Tibial artery (tissue), 4 donors: ENCODE measurements at regions of chr10 and their contacts with region 1.

Region 1: DNA sequence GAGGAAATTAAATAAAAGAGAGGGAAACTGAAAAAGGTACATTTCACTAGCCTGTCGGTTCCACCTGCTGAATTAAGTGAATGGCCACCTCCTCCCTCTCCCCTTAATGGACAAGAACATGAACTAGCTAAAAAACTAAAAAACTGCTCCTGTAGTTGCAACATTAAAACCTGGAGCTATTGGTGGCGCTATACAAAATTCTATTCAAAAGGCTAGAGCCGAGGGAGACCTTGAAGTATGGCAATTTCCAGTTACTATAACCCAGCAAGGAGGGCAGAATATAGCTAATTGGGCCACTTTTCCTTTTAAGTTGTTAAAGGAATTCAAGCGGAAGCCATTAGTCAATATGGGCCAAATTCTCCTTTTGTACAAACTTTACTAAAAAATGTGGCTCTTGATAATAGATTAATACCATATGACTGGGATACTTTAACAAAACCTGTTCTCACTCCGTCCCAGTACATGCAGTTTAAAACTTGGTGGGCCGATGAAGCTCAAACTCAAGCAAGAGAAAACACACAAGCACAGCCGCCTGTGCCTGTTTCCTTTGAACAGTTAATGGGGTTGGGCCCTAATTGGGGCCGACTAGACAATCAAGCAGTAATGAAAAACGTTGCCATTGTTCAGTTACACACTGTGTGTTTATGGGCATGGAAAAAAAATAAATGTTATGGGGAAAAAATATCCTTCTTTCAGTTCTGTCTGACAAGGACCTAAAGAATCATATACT is 6.5 kb upstream of the CHST3 start:
- DNase-seq: no peak
- H3K4me3 ChIP-seq: no peak overlapping the region
- H3K27ac ChIP-seq: no peak overlapping the region
- H3K4me1 ChIP-seq: peaks cover 0 to 2% (median 1%) of the 10 kb centered on the region in 4 donors
- H3K27me3 ChIP-seq: no peaks in the 10 kb centered on the region
- CTCF ChIP-seq: no peak

Region 2: DNA sequence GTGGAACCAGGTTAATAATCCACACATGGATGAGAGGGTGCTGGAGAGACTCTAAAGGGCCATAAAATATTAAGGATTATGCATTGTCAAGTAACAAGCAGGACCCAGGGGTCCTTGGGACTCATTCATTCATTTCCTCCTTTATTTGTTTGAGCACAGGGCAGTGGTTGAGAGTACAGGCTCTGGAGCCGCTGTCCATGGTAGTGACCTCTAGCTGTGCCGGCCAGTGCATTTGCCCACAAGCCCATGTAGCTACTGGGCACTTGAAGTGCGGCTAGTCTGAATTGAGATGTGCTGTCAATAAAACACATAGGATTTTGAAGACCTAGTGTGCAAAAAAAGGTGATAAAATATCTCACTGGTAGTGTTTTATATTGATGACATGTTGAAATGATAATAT is 375.7 kb before region 1 on chr10:
- intact Hi-C with region 1: no loop called
- DNase-seq: no peak
- H3K4me3 ChIP-seq: no peak overlapping the region
- H3K27ac ChIP-seq: no peak overlapping the region
- H3K4me1 ChIP-seq: no peaks in the 10 kb centered on the region
- H3K27me3 ChIP-seq: peaks cover 0 to 49% of the 10 kb centered on the region in 2 donors
- CTCF ChIP-seq: no peak

Region 3: GRCh38 chr10:71756311-71757191 is 201.2 kb before region 1 on chr10:
- intact Hi-C with region 1: no loop called
- DNase-seq: no peak
- H3K4me3 ChIP-seq: no peak overlapping the region
- H3K27ac ChIP-seq: no peak overlapping the region
- H3K4me1 ChIP-seq: peaks cover 0 to 24% (median 5%) of the 10 kb centered on the region in 4 donors
- H3K27me3 ChIP-seq: no peaks in the 10 kb centered on the region
- CTCF ChIP-seq: no peak

Region 4: GRCh38 chr10:71899665-71900412 is 57.9 kb before region 1 on chr10:
- intact Hi-C with region 1: loop called (anchors 2 kb)
- DNase-seq: no peak
- H3K4me3 ChIP-seq: no peak overlapping the region
- H3K27ac ChIP-seq: no peak overlapping the region
- H3K4me1 ChIP-seq: no peaks in the 10 kb centered on the region
- H3K27me3 ChIP-seq: no peaks in the 10 kb centered on the region
- CTCF ChIP-seq: no peak

Region 5: GRCh38 chr10:71998840-71999194 is 41.1 kb after region 1 on chr10:
- intact Hi-C with region 1: no loop called
- DNase-seq: peak; percentile 74 to 86
- H3K4me3 ChIP-seq: peak overlapping the region in 1 of 2 donors; percentile 19
- H3K27ac ChIP-seq: peak overlapping the region; percentile 76 to 81
- H3K4me1 ChIP-seq: peaks cover 6 to 76% (median 64%) of the 10 kb centered on the region in 4 donors
- H3K27me3 ChIP-seq: no peaks in the 10 kb centered on the region
- CTCF ChIP-seq: no peak

Region 6: DNA sequence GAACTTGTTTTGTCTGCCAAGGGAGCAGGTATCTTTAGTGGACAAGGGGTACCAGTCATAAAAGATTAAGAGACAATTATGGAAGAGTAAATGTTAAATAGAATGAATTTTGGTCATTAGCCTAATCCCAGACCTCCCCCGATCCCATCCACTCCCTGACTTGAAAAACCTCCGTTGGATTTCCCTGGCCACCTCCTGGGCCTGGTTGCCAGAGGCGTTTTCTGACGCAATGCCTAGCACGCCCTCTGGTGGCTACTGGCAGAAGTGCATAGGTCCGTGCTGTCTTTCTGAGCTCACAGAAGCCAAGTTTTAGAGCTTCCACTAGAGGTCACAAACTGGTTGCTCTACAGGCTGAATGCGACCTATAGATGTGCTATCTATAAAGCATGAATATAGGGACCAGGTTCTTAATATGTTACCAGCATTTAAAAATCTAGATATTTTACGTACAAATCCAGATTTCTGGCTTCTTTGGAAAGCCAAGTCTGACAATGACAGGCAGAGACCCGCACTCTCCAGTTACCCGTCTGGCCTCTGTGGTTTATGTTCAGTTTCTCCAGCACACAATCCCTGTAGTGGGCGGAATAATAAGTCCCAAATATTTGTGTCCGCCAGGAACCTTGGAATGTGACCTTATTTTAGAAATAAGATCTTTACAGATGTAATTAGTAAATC is 90.9 kb after region 1 on chr10:
- intact Hi-C with region 1: loop called (anchors 2 kb)
- DNase-seq: peak; percentile 92 to 95
- H3K4me3 ChIP-seq: no peak overlapping the region
- H3K27ac ChIP-seq: no peak overlapping the region
- H3K4me1 ChIP-seq: peaks cover 0 to 15% (median 9%) of the 10 kb centered on the region in 4 donors
- H3K27me3 ChIP-seq: no peaks in the 10 kb centered on the region
- CTCF ChIP-seq: peak; percentile 98 to 100

Region 7: GRCh38 chr10:72334825-72335393 is 377.2 kb after region 1 on chr10:
- intact Hi-C with region 1: loop called (anchors 5 kb)
- DNase-seq: peak; percentile 88 to 98
- H3K4me3 ChIP-seq: peak overlapping the region in 1 of 2 donors; percentile 11
- H3K27ac ChIP-seq: peak overlapping the region; percentile 83 to 94
- H3K4me1 ChIP-seq: peaks cover 11 to 73% (median 67%) of the 10 kb centered on the region in 4 donors
- H3K27me3 ChIP-seq: no peaks in the 10 kb centered on the region
- CTCF ChIP-seq: peak in 1 of 2 experiments; percentile 5